ENCODE measurements at regions of chr19 and their contacts with region 1.

Region 1: DNA sequence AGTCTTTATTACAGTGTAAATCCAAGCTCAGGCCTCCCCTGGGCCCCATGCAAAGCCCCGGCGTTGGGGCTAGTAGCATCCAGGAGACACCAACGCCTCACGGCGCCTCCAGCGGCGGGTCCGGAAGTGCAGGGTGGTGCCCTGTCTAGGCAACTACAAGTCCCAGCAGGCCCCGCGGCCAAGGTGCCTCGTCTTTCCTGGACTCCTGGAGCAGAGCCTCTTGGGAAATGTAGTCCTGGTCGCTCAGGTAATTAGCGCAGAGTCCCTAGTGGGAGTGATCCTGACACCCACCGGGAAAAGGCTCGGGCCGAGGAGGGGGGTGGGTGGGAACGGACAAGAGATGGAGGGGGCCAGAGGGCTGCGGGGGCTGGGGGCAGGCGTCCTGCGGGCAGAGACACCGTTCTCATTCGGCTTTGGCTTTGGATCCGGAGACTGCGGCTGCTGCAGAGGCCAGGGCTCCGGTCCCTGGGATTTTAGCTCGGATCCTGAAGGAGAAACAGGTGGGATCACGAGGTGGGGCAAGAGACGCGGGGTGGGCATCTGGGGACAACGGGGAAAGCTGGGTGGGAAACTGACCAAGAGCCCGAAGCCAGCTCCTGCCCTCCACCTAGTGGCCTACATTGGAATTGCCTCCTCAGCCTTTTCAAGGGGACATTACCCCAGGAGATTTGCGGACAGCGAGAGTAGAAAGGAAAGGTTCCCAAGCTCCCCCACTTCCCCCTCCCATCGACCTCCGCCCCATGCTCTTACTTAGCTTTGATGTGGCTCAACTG is 11.4 kb downstream of the RTN2 start:
- DNase-seq: peak; percentile 99
- H3K4me3 Mint-ChIP-seq: peak overlapping the region; percentile 90
- H3K27ac Mint-ChIP-seq: peak overlapping the region; percentile 80
- H3K4me1 Mint-ChIP-seq: peaks cover 16% of the 10 kb centered on the region
- H3K27me3 Mint-ChIP-seq: peaks cover 4% of the 10 kb centered on the region

Region 2: DNA sequence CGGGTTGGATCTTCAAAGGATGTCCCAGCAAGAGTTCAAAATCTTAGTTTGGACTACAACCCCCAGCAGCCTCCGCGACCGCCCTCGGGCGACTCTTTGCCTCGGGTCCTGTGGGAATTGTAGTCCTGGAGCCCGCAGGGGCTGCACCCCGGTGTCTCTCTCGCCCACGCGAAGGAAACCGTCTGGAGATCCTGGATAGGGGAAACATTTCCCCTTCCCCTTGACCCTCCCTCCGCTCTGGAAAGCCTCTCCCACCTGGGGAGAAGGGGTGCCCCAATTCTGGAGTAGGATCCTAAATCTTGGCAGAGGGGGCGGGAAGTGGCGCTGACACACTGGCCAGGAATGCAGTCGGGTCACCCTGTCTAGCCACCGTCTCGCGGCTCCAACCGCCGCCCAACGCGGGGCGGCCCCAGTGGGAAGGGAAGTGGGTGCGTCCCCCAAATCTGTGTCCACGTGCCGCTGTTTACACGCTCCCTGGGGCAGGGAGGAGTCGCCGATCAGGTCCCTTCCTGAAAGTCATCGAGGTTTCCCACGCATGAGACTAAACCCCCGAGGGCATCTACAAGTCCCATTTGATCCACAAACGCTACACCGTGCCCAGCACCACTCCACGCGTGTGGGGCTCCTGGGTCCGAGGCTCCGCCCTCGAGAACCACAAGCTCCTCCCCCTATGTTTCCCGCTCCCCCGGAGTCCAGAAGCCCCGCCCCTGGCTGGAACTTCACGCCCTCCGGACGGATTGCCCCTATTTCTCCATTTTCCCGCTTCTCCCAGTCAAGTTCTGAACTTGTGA is 79.9 kb before region 1 on chr19:
- CTCF ChIA-PET with region 1: interaction called, 15 read pairs
- POLR2A ChIA-PET with region 1: no interaction called
- DNase-seq: peak; percentile 88
- H3K4me3 Mint-ChIP-seq: peak overlapping the region; percentile 85
- H3K27ac Mint-ChIP-seq: peak overlapping the region; percentile 95
- H3K4me1 Mint-ChIP-seq: peaks cover 43% of the 10 kb centered on the region
- H3K27me3 Mint-ChIP-seq: peaks cover 19% of the 10 kb centered on the region

Region 3: DNA sequence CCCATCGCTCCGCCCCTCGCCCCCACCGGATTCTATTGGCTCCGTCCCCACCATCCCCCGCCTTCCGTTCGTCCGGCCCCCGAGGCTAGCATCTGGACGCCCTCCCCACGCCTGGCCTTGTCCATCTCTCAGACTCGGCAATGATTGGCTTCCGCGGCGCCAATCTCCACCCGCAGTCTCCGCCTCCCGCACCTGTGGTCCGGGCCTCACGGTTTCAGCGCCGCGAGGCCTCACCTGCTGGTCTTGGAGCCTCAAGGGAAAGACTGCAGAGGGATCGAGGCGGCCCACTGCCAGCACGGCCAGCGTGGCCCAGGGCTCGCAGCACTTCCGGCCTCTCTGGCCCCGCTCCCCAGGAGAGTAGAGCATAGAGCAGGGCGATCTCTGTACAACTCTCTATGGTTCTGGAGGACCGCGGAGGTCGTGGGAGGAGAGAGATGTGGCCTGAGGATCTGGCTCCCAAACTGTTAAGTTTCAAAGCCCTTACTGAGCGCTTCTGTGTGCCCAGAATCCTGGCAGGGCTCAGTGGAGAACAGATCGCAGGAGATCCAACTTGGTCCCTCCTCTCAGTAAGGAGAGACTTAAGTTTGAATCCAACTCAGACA is 61.8 kb before region 1 on chr19 and contains the start of gene ERCC1:
- CTCF ChIA-PET with region 1: interaction called, 24 read pairs
- POLR2A ChIA-PET with region 1: no interaction called
- DNase-seq: peak; percentile 89
- H3K4me3 Mint-ChIP-seq: peak within 1 kb of the TSS; percentile 85
- H3K27ac Mint-ChIP-seq: peak within 1 kb of the TSS; percentile 86
- H3K4me1 Mint-ChIP-seq: peaks cover 65% of the 10 kb centered on the region
- H3K27me3 Mint-ChIP-seq: peaks cover 7% of the 10 kb centered on the region
- total RNA-seq, gene ERCC1: 59.9 to 66.1 TPM

Region 4: DNA sequence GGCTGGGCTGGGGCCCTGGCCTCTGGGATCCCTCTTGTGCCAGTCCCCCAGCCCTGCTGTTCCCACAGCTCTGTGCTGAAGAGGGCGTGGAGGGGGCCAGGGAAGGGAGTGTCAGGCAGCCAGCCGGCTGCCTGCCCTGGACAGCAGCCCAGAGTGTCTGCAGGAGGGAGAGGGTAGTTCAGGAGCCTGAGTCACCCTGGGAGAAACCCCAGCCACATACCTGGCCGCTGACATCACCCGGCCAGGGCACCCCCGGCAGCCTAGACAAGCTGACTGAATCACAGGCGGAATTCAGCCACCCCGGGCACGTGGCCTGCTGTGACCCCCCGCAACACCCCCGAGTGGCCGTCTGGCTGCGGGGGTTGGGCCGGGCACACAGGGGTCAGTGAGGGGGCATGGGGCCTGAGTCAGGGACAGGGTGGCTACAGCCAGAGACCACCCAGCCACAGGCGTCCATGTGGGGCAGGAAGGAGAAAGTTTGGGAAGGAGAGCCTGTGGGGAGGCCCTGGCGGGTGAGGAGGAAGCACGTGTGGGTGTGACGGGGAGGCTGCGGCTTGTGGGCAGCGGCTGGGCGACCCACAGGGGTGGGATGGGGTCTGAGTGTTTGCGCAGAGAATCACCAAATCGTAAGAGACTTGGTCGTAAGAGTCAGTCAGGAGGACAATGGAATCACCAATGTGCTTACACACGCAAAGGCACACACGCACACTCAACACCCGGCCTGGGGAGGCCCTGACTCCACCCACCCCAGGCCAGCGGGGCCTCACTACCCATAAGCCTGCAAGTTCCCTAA is 29.6 kb before region 1 on chr19:
- CTCF ChIA-PET with region 1: interaction called, 13 read pairs
- POLR2A ChIA-PET with region 1: no interaction called
- DNase-seq: no peak
- H3K4me3 Mint-ChIP-seq: no peak overlapping the region
- H3K27ac Mint-ChIP-seq: no peak overlapping the region
- H3K4me1 Mint-ChIP-seq: peaks cover 28% of the 10 kb centered on the region
- H3K27me3 Mint-ChIP-seq: peaks cover 4% of the 10 kb centered on the region

Region 5: DNA sequence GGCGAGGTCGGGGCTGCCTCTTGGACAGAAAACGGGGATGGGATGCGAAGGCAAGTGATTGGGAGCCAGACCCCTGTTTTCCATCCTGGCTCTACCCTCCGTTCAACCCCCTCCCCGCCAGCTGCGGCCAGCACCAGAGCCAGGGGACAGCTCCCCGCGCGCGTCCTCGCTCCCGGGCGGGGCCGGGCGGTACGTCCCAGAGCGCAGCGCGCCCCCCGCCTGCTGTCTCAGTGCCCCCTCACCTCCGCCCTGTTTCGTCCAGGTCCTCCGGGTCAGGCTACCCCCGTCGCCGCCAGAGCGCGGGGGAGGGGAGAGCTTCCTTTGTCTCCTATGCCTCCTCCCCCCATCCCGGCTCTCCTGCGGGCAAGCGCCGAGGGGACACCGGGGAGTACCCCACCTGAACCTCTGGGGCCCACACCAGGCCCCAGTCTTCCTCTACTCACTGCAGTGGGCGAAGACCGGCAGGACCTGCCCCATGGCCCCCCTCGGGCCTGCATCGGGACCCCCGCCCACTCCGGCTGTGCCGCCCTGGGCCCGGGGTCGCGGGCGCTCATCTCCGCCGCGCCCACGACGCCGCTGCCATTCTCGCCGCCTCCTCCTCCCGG is 11.0 kb after region 1 on chr19:
- CTCF ChIA-PET with region 1: interaction called, 48 read pairs
- POLR2A ChIA-PET with region 1: no interaction called
- DNase-seq: peak; percentile 55
- H3K4me3 Mint-ChIP-seq: peak overlapping the region; percentile 50
- H3K27ac Mint-ChIP-seq: no peak overlapping the region
- H3K4me1 Mint-ChIP-seq: peaks cover 43% of the 10 kb centered on the region
- H3K27me3 Mint-ChIP-seq: peaks cover 35% of the 10 kb centered on the region

Region 6: GRCh38 chr19:45632468-45633196 is 147.1 kb after region 1 on chr19:
- CTCF ChIA-PET with region 1: no interaction called
- POLR2A ChIA-PET with region 1: no interaction called
- DNase-seq: peak; percentile 36
- H3K4me3 Mint-ChIP-seq: no peak overlapping the region
- H3K27ac Mint-ChIP-seq: peak overlapping the region; percentile 41
- H3K4me1 Mint-ChIP-seq: peaks cover 6% of the 10 kb centered on the region
- H3K27me3 Mint-ChIP-seq: no peaks in the 10 kb centered on the region

Region 7: GRCh38 chr19:45692187-45693105 is 207.0 kb after region 1 on chr19 and contains the start of gene QPCTL:
- CTCF ChIA-PET with region 1: interaction called, 10 read pairs
- POLR2A ChIA-PET with region 1: no interaction called
- DNase-seq: peak; percentile 99
- H3K4me3 Mint-ChIP-seq: peak within 1 kb of the TSS; percentile 92
- H3K27ac Mint-ChIP-seq: peak within 1 kb of the TSS; percentile 91
- H3K4me1 Mint-ChIP-seq: peaks cover 18% of the 10 kb centered on the region
- H3K27me3 Mint-ChIP-seq: no peaks in the 10 kb centered on the region
- total RNA-seq, gene QPCTL: 6.1 to 7.3 TPM